Posterior vena cava (tissue), 2 donors: ENCODE measurements at regions of chr3 and their contacts with region 1.

Region 1: DNA sequence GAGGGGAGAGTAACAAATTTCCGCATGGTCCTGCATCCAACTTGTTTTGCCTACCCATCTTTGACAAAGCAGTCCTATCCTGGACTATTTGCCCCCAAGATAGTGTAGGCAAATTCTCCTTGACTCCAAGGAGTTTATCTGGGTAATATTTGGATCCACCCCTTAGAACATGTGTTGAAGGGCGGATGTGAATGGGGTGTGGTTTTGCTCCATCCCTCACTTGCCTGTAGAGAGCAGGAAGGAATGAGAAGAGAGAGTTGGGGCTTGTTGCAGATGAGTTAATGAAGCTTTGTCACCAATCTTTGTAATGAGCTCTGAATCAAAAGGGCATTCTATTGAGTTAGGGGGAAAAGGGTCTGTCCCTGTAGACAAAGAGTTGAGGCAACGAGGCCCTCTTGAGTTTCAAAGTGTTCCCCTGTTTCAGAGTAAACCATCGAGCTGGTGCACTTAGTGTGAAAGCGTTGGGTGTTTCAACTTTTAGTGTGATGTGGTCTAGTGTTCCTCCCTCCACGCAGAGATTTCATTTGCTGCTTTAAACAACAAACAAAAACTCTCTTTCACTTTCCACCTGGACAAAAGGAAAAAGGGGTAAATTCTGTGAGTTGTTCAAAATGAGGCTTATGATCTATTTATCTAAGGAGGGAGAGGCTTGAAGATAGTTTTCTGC is 42.2 kb upstream of the PPARG start:
- DNase-seq: no peak

Region 2: GRCh38 chr3:11498646-11499045 is 748.0 kb before region 1 on chr3:
- intact Hi-C with region 1: loop called in 1 of 2 experiments (anchors 5 kb)
- DNase-seq: no peak

Region 3: GRCh38 chr3:13600941-13601576 is 1354.4 kb after region 1 on chr3:
- intact Hi-C with region 1: loop called in 1 of 2 experiments (anchors 10 kb)
- DNase-seq: no peak